WTC11 (cell line): ENCODE measurements at regions of chr5 and their contacts with region 1.

Region 1: DNA sequence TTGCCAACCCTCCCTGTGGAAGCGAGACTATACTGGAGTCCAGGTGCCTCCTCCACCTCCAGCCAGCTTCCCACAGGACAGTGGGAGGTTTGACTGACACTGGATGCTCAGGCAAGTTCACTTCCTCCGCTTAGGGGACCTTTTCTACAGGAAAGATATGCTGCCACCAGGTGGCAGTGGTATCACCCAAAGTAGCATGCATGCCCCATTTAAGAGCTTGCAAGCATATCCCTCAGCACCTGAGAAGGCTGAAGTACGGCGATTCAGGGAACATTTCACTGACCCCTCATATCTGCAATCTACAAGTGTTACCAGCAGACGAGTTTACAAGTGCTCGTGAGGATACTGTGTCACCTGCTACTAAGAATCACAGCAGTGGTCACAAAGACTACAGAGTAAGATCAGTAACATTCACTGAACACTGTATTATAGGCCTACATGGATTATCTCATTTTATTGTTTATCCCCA is 75.5 kb downstream of the KLHL3 start:
- DNase-seq: peak; percentile 82
- ATAC-seq: peak; percentile 97
- H3K4me3 Mint-ChIP-seq: no peak overlapping the region
- H3K27ac Mint-ChIP-seq: no peak overlapping the region
- H3K4me1 Mint-ChIP-seq: no peaks in the 10 kb centered on the region
- H3K27me3 Mint-ChIP-seq: no peaks in the 10 kb centered on the region
- CTCF ChIP-seq: peak; percentile 71; the same call in 1 of the 2 replicates

Region 2: DNA sequence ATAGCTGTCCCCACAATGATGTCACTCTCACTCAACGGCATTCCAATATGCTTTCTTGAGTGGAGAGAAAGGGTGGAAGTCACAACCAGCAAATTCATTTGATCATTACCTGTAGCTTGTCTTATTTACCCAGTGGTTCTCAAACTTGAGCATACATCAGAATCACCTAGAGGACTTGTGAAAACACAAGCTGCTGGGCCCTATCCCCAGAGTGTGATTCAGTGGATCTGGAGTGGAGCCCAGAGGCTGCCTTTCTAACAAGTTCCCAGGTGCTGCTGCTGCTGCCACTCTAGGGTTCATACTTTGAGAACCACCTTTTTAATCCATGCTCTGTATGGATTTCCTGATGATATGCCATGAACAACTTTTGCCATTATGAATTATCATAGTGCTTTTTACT is 19.2 kb before region 1 on chr5:
- CTCF ChIA-PET with region 1: interaction called, 13 read pairs
- POLR2A ChIA-PET with region 1: no interaction called
- DNase-seq: no peak
- ATAC-seq: no peak
- H3K4me3 Mint-ChIP-seq: no peak overlapping the region
- H3K27ac Mint-ChIP-seq: no peak overlapping the region
- H3K4me1 Mint-ChIP-seq: no peaks in the 10 kb centered on the region
- H3K27me3 Mint-ChIP-seq: no peaks in the 10 kb centered on the region
- CTCF ChIP-seq: no peak

Region 3: GRCh38 chr5:137730336-137730735 is 70.0 kb after region 1 on chr5:
- CTCF ChIA-PET with region 1: interaction called, 50 read pairs
- POLR2A ChIA-PET with region 1: interaction called, 4 read pairs
- DNase-seq: no peak
- ATAC-seq: no peak
- H3K4me3 Mint-ChIP-seq: no peak overlapping the region
- H3K27ac Mint-ChIP-seq: no peak overlapping the region
- H3K4me1 Mint-ChIP-seq: no peaks in the 10 kb centered on the region; the same call in 1 of the 2 replicates
- H3K27me3 Mint-ChIP-seq: no peaks in the 10 kb centered on the region
- CTCF ChIP-seq: no peak

Region 4: DNA sequence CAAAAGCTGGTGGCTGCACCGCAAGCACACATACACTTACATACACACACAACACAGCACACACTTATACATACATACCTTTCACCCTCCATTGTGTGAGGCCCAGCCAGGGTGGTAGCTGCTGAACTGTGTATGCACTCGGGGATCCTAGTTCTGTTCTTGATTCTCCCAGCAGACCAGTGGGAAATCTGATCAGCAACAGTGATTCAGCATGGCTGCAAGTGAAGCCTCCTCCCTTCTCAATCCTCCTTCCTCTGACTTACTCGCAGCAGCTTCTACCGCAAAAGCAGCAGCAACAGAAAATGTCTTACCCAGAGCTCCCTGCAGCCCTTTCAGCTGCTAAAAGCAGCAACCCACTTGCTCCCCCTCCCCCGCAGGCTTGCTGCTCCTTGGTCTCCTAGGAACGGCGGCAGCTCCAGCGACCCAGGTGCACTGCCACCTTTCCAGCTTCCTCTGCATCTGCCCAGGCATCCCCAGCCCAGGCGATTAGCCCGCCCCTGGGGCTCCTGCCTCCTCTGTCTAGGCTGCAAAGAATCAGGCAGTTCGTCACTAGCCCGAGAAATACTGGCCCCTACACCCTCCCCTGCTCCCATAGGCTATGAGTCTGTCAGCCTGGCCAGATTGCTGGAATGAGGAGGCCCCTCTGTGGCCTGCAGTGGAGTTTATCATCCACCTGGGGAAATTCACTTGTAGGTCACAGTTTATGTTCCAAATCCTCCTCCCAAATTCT is 75.3 kb after region 1 on chr5 and contains the start of gene KLHL3:
- CTCF ChIA-PET with region 1: interaction called, 118 read pairs
- POLR2A ChIA-PET with region 1: interaction called, 4 read pairs
- DNase-seq: peak; percentile 89
- ATAC-seq: peak; percentile 97
- H3K4me3 Mint-ChIP-seq: no peak within 1 kb of the TSS
- H3K27ac Mint-ChIP-seq: no peak within 1 kb of the TSS
- H3K4me1 Mint-ChIP-seq: peaks cover 3% of the 10 kb centered on the region
- H3K27me3 Mint-ChIP-seq: no peaks in the 10 kb centered on the region; the same call in 1 of the 2 replicates
- CTCF ChIP-seq: no peak
- total RNA-seq, gene KLHL3: 14.7 to 18.2 TPM (median 15.7 TPM) in 3 replicates

Region 5: GRCh38 chr5:137743031-137743640 is 82.8 kb after region 1 on chr5:
- CTCF ChIA-PET with region 1: interaction called, 118 read pairs
- POLR2A ChIA-PET with region 1: no interaction called
- DNase-seq: peak; percentile 43
- ATAC-seq: peak; percentile 87
- H3K4me3 Mint-ChIP-seq: no peak overlapping the region
- H3K27ac Mint-ChIP-seq: no peak overlapping the region
- H3K4me1 Mint-ChIP-seq: peaks cover 8% of the 10 kb centered on the region; the same call in 1 of the 2 replicates
- H3K27me3 Mint-ChIP-seq: no peaks in the 10 kb centered on the region; the same call in 1 of the 2 replicates
- CTCF ChIP-seq: peak; percentile 37; the same call in 1 of the 2 replicates

Region 6: GRCh38 chr5:137754126-137754960 is 94.0 kb after region 1 on chr5 and contains the start of gene HNRNPA0:
- CTCF ChIA-PET with region 1: interaction called, 15 read pairs
- POLR2A ChIA-PET with region 1: interaction called, 3 read pairs
- DNase-seq: peak; percentile 96
- ATAC-seq: peak; percentile 92
- H3K4me3 Mint-ChIP-seq: peak within 1 kb of the TSS; percentile 95
- H3K27ac Mint-ChIP-seq: peak within 1 kb of the TSS; percentile 100
- H3K4me1 Mint-ChIP-seq: peaks cover 23% of the 10 kb centered on the region
- H3K27me3 Mint-ChIP-seq: peaks cover 29% of the 10 kb centered on the region
- CTCF ChIP-seq: no peak
- total RNA-seq, gene HNRNPA0: 65.6 to 66.6 TPM (median 66.0 TPM) in 3 replicates